Naive thymus-derived CD4-positive, alpha-beta T cell (primary cell): ENCODE measurements at regions of chr2 and their contacts with region 1.

Region 1: GRCh38 chr2:135913727-135914365 is 37.6 kb upstream of the MCM6 start:
- DNase-seq: peak in 7 of 9 donors; percentile 36 to 67 (median 60)
- ATAC-seq: peak; percentile 63
- H3K4me3 ChIP-seq: no peak overlapping the region
- H3K4me3 Mint-ChIP-seq: no peak overlapping the region
- H3K27ac ChIP-seq: no peak overlapping the region
- H3K27ac Mint-ChIP-seq: peak overlapping the region in 6 of 9 donors; percentile 34 to 82 (median 55)
- H3K4me1 ChIP-seq: no peaks in the 10 kb centered on the region
- H3K4me1 Mint-ChIP-seq: peaks cover 0 to 12% (median 3%) of the 10 kb centered on the region in 7 donors
- H3K27me3 ChIP-seq: no peaks in the 10 kb centered on the region
- H3K27me3 Mint-ChIP-seq: no peaks in the 10 kb centered on the region

Region 2: DNA sequence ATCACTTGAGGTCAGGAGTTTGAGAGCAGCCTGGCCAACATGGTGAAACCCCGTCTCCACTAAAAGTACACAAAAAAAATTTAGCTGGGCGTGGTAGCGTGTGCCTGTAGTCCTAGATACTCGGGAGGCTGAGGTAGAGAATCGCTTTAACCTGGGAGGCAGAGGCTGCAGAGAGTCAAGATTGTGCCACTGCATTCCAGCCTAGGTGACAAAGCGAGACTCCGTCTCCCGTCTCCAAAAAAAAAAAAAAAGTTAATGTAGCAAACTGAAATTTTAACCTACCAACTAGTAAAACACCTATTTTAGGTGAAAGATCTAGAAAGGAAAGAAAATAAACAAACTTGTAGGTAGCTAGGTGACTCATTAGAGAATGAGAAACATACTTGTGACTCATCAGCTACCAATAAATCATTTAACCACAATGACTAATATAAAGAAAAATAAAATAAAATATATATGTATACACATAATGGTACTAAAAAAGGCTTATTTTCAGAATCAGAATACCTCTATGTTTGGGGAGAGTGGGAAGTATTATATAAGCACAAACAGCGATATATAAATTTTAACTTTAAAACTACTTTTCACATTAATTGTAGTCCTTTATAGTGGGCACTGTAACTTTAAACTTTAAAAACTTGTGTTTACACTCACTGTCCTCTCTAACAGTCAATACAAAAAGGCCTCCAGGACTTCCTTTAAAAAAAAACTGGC is 35.0 kb after region 1 on chr2:
- CTCF ChIA-PET with region 1: no interaction called
- POLR2A ChIA-PET with region 1: no interaction called
- intact Hi-C with region 1: no loop called
- DNase-seq: no peak
- ATAC-seq: peak; percentile 61
- H3K4me3 ChIP-seq: no peak overlapping the region
- H3K4me3 Mint-ChIP-seq: peak overlapping the region in 2 of 10 donors; percentile 16 to 40
- H3K27ac ChIP-seq: no peak overlapping the region
- H3K27ac Mint-ChIP-seq: peak overlapping the region in 3 of 9 donors; percentile 69 to 95 (median 94)
- H3K4me1 ChIP-seq: peaks cover 2 to 14% of the 10 kb centered on the region in 2 donors
- H3K4me1 Mint-ChIP-seq: peaks cover 19 to 66% (median 59%) of the 10 kb centered on the region in 7 donors
- H3K27me3 ChIP-seq: no peaks in the 10 kb centered on the region
- H3K27me3 Mint-ChIP-seq: no peaks in the 10 kb centered on the region

Region 3: GRCh38 chr2:135960656-135961551 is 47.1 kb after region 1 on chr2:
- CTCF ChIA-PET with region 1: interaction called, 3 read pairs
- POLR2A ChIA-PET with region 1: no interaction called
- intact Hi-C with region 1: loop called in 1 of 2 experiments (anchors 5 kb)
- DNase-seq: peak in 6 of 9 donors; percentile 3 to 44 (median 26)
- ATAC-seq: peak; percentile 76
- H3K4me3 ChIP-seq: no peak overlapping the region
- H3K4me3 Mint-ChIP-seq: peak overlapping the region in 9 of 10 donors; percentile 3 to 79 (median 37)
- H3K27ac ChIP-seq: peak overlapping the region; percentile 40
- H3K27ac Mint-ChIP-seq: peak overlapping the region; percentile 51 to 93 (median 83)
- H3K4me1 ChIP-seq: peaks cover 18 to 26% of the 10 kb centered on the region in 2 donors
- H3K4me1 Mint-ChIP-seq: peaks cover 37 to 67% (median 60%) of the 10 kb centered on the region in 7 donors
- H3K27me3 ChIP-seq: no peaks in the 10 kb centered on the region
- H3K27me3 Mint-ChIP-seq: no peaks in the 10 kb centered on the region

Region 4: GRCh38 chr2:136191041-136191440 is 277.2 kb after region 1 on chr2:
- CTCF ChIA-PET with region 1: no interaction called
- POLR2A ChIA-PET with region 1: no interaction called
- intact Hi-C with region 1: loop called in 1 of 2 experiments (anchors 10 kb)
- DNase-seq: no peak
- ATAC-seq: no peak
- H3K4me3 ChIP-seq: no peak overlapping the region
- H3K4me3 Mint-ChIP-seq: no peak overlapping the region
- H3K27ac ChIP-seq: no peak overlapping the region
- H3K27ac Mint-ChIP-seq: peak overlapping the region in 1 of 9 donors; percentile 30
- H3K4me1 ChIP-seq: no peaks in the 10 kb centered on the region
- H3K4me1 Mint-ChIP-seq: peaks cover 0 to 8% (median 0%) of the 10 kb centered on the region in 7 donors
- H3K27me3 ChIP-seq: no peaks in the 10 kb centered on the region
- H3K27me3 Mint-ChIP-seq: no peaks in the 10 kb centered on the region

Region 5: GRCh38 chr2:136327162-136327852 is 413.5 kb after region 1 on chr2:
- CTCF ChIA-PET with region 1: interaction called, 6 read pairs
- POLR2A ChIA-PET with region 1: no interaction called
- intact Hi-C with region 1: loop called in 1 of 2 experiments (anchors 2 kb)
- DNase-seq: peak; percentile 28 to 90 (median 83)
- ATAC-seq: peak; percentile 93
- H3K4me3 ChIP-seq: peak overlapping the region; percentile 38
- H3K4me3 Mint-ChIP-seq: peak overlapping the region; percentile 74 to 89 (median 82)
- H3K27ac ChIP-seq: peak overlapping the region; percentile 74
- H3K27ac Mint-ChIP-seq: peak overlapping the region; percentile 93 to 99 (median 97)
- H3K4me1 ChIP-seq: peaks cover 17 to 44% of the 10 kb centered on the region in 2 donors
- H3K4me1 Mint-ChIP-seq: peaks cover 43 to 73% (median 62%) of the 10 kb centered on the region in 7 donors
- H3K27me3 ChIP-seq: no peaks in the 10 kb centered on the region
- H3K27me3 Mint-ChIP-seq: no peaks in the 10 kb centered on the region

Region 6: GRCh38 chr2:136423516-136423996 is 509.7 kb after region 1 on chr2:
- CTCF ChIA-PET with region 1: interaction called, 4 read pairs
- POLR2A ChIA-PET with region 1: no interaction called
- intact Hi-C with region 1: loop called in 1 of 2 experiments (anchors 1 kb)
- DNase-seq: peak; percentile 54 to 80 (median 72)
- ATAC-seq: peak; percentile 96
- H3K4me3 ChIP-seq: peak overlapping the region; percentile 59
- H3K4me3 Mint-ChIP-seq: peak overlapping the region; percentile 77 to 92 (median 86)
- H3K27ac ChIP-seq: no peak overlapping the region
- H3K27ac Mint-ChIP-seq: peak overlapping the region in 6 of 9 donors; percentile 20 to 79 (median 41)
- H3K4me1 ChIP-seq: peaks cover 4 to 9% of the 10 kb centered on the region in 2 donors
- H3K4me1 Mint-ChIP-seq: peaks cover 12 to 24% (median 15%) of the 10 kb centered on the region in 7 donors
- H3K27me3 ChIP-seq: no peaks in the 10 kb centered on the region
- H3K27me3 Mint-ChIP-seq: peaks cover 22 to 58% (median 35%) of the 10 kb centered on the region in 5 donors